Activated CD4-positive, alpha-beta T cell treated with anti-CD3 and anti-CD28 coated beads for 36 hours (primary cell): ENCODE measurements at regions of chr9 and their contacts with region 1.

Region 1: GRCh38 chr9:136944519-136945279 is at the starts of genes C8G and FBXW5:
- DNase-seq: peak; percentile 97
- ATAC-seq: peak; percentile 84
- H3K4me3 Mint-ChIP-seq: peak within 1 kb of the TSS; percentile 77
- H3K27ac Mint-ChIP-seq: peak within 1 kb of the TSS; percentile 88
- H3K4me1 Mint-ChIP-seq: peaks cover 9% of the 10 kb centered on the region
- H3K27me3 Mint-ChIP-seq: no peaks in the 10 kb centered on the region
- total RNA-seq, gene C8G: 0.77 TPM in 1 of 2 experiments, not detected in the other
- total RNA-seq, gene FBXW5: 54.4 to 66.4 TPM

Region 2: DNA sequence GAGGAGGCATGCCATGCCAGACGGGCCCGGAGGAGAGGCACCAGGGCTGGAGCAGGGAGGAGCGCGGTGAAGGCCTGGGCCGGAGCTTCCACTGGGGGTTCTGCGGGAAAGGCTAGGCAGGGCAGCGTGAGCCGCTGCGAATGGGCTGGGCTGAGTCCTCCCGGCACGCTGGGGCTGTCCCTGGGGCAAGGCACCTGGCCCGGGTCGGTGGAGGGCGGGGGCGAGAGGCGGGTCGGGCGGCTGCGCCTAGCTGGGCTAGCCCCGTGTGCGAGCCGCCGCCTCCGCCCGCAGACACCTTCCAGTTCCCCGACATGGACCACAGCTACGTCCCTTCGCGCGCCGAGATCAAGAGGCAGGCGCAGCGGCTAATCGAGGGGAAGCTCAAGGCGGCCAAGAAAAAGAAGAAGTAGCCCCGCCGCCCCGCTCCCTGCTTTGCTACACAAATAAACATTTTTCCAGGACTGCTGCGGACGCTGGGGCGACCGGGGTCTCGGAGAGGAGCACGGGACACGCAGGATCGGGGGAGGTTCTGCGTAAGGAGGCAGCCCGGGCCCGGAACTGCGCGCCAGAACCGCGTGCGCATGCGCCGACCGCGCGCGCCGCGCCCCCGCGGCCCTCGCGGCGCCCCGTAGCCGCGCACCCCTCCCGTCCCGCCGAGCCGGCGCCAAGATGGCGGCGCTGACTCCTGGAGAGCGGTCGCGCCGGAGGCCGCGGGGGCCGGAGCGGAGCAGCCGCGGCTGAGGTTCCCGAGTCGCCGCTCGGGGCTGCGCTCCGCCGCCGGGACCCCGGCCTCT is 137.2 kb before region 1 on chr9 and contains the start of gene RABL6:
- CTCF ChIA-PET with region 1: interaction called, 3 read pairs
- POLR2A ChIA-PET with region 1: no interaction called
- intact Hi-C with region 1: loop called in 1 of 2 experiments (anchors 1 kb)
- DNase-seq: peak; percentile 86
- ATAC-seq: peak; percentile 88
- H3K4me3 Mint-ChIP-seq: peak within 1 kb of the TSS; percentile 81
- H3K27ac Mint-ChIP-seq: peak within 1 kb of the TSS; percentile 88
- H3K4me1 Mint-ChIP-seq: peaks cover 33% of the 10 kb centered on the region
- H3K27me3 Mint-ChIP-seq: no peaks in the 10 kb centered on the region
- total RNA-seq, gene RABL6: 66.2 to 71.8 TPM

Region 3: DNA sequence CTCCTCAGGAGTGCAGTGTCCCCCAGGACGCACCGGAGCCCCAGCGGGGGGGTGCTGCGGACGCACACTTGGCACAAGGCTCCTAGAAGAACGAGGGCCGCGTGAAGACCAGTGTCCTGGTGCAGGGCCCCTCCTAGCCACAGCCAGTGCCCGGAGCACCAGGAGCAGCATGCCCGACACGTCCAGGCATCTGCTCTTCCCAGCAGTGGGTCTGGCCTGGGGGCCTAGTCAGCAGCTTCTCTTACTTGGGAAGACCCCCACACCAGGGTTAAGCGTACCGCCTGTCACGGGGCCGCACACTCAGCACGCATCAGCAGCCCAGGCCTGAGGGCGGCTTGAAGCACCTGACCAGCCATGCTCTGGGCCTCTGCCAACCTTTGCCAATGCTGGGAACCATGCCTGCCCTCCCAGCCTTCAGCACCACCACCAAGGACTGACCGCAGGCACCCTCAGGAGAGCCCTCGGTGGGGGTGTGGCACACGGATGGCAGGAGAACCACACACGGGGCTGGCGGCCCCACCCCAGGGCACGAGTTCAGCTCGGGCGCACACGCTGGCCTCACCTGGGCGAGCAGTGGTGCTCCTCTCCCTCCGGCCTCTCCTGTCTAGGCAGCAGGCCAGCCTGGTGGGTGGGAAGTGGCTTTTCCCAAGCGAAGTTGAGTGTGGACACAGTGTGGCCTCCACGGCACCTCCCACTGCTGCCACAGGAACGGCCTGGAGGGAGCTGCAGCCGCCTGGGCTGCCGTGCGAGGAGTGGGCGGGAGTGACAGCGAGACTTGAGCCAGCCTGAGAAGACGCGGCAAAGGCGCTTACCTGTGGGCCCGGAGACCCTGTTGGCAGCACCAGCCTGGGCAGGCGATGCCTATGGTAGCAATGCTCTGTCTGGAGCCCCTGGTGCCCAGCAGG is 114.5 kb before region 1 on chr9:
- CTCF ChIA-PET with region 1: no interaction called
- POLR2A ChIA-PET with region 1: no interaction called
- intact Hi-C with region 1: no loop called
- DNase-seq: no peak
- ATAC-seq: no peak
- H3K4me3 Mint-ChIP-seq: no peak overlapping the region
- H3K27ac Mint-ChIP-seq: no peak overlapping the region
- H3K4me1 Mint-ChIP-seq: no peaks in the 10 kb centered on the region
- H3K27me3 Mint-ChIP-seq: no peaks in the 10 kb centered on the region

Region 4: GRCh38 chr9:136902259-136902821 is 42.4 kb before region 1 on chr9:
- CTCF ChIA-PET with region 1: interaction called, 3 read pairs
- POLR2A ChIA-PET with region 1: no interaction called
- intact Hi-C with region 1: loop called (anchors 1 to 5 kb)
- DNase-seq: peak; percentile 93
- ATAC-seq: peak; percentile 85
- H3K4me3 Mint-ChIP-seq: peak overlapping the region; percentile 62
- H3K27ac Mint-ChIP-seq: peak overlapping the region; percentile 98
- H3K4me1 Mint-ChIP-seq: peaks cover 41% of the 10 kb centered on the region
- H3K27me3 Mint-ChIP-seq: no peaks in the 10 kb centered on the region

Region 5: GRCh38 chr9:136960212-136960937 is 15.7 kb after region 1 on chr9:
- CTCF ChIA-PET with region 1: no interaction called
- POLR2A ChIA-PET with region 1: no interaction called
- intact Hi-C with region 1: no loop called
- DNase-seq: no peak
- ATAC-seq: no peak
- H3K4me3 Mint-ChIP-seq: no peak overlapping the region
- H3K27ac Mint-ChIP-seq: no peak overlapping the region
- H3K4me1 Mint-ChIP-seq: peaks cover 14% of the 10 kb centered on the region
- H3K27me3 Mint-ChIP-seq: no peaks in the 10 kb centered on the region

Region 6: GRCh38 chr9:137029058-137029936 is 84.6 kb after region 1 on chr9:
- CTCF ChIA-PET with region 1: interaction called, 23 read pairs
- POLR2A ChIA-PET with region 1: no interaction called
- intact Hi-C with region 1: loop called (anchors 1 kb)
- DNase-seq: peak; percentile 88
- ATAC-seq: peak; percentile 52
- H3K4me3 Mint-ChIP-seq: peak overlapping the region; percentile 60
- H3K27ac Mint-ChIP-seq: peak overlapping the region; percentile 42
- H3K4me1 Mint-ChIP-seq: peaks cover 46% of the 10 kb centered on the region
- H3K27me3 Mint-ChIP-seq: no peaks in the 10 kb centered on the region

Region 7: DNA sequence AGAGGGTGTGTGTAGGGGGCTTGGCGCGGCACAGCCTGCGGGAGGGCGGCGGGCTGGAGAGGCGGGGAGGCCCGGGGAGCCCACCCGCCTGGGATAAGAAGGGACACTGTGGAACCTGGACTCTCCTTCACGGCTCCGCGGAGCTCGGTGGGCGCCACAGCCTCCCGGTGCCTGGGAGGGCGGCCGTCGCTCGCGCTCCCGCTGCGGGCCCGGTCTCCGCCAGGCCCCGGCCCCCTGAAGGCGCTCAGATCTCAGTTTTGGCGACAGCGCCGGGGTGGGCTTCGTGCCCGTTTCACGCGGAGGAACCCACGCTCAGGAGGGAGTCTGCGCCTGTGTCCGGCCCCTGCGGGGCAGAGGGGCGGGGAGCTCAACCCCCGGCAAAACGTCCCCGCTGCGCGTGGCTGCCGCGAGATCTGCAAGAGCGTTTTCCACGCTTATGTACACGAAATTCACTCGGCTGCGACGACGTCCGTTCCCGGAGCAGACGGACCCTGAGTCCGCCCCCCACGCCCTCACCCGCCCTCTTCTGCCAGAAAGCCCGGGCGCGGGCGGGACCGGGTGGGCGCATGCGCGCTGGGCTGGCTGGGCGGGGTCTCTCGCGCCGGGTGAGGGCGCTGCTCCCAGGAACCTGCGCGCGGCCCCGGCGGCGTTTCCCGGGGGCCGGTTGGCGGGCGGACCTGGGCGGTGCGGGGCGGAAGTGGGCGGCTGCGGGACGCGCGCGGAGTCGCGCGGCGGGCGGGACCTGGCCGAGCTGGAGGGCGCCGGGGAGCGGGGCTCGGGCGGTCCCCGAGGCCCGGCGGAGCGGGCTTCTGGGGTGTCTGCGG is 310.1 kb after region 1 on chr9 and contains the start of gene NELFB:
- CTCF ChIA-PET with region 1: no interaction called
- POLR2A ChIA-PET with region 1: no interaction called
- intact Hi-C with region 1: loop called in 1 of 2 experiments (anchors 1 kb)
- DNase-seq: peak; percentile 97
- ATAC-seq: peak; percentile 94
- H3K4me3 Mint-ChIP-seq: peak within 1 kb of the TSS; percentile 87
- H3K27ac Mint-ChIP-seq: peak within 1 kb of the TSS; percentile 81
- H3K4me1 Mint-ChIP-seq: peaks cover 18% of the 10 kb centered on the region
- H3K27me3 Mint-ChIP-seq: no peaks in the 10 kb centered on the region
- total RNA-seq, gene NELFB: 41.4 to 54.1 TPM